Sigmoid colon (tissue), 7 donors: ENCODE measurements at regions of chr13 and their contacts with region 1.

Region 1: DNA sequence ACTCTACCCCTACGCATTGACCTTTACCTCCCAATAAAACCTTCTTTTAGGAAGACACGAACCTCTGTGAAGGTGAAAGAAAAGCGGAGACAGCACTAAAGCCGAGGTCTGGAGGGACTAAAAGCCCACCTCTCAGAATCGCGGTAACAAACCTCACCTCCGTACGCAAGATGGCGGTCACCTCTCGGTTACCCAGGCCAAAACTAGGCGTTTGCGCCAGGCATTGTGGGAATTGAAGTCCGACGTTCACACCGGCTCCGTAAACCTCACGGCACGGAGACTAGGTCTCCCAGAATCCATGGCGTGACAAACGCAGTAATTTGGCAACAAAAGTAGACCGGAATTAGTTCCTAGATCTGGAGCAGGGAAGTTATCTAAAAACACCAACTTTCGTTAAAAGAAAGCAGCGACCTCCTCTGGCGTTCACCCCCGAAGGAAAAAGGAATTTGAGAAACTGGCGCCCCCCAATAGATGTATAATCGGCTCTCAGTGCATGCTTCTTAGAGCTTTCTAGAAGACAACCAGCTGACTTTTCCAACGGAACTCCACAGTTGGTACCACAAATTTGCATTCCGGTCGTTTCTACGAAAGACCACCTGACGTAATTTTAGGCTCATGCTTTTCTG is at the start of gene N4BP2L2:
- DNase-seq: peak; percentile 98
- H3K4me3 ChIP-seq: peak within 1 kb of the TSS; percentile 68 to 83 (median 76)
- H3K27ac ChIP-seq: peak within 1 kb of the TSS; percentile 90 to 94 (median 92)
- H3K4me1 ChIP-seq: peaks cover 0 to 40% (median 39%) of the 10 kb centered on the region in 4 donors
- H3K27me3 ChIP-seq: no peaks in the 10 kb centered on the region
- CTCF ChIP-seq: no peak
- EP300 ChIP-seq: peak in 1 of 4 donors; percentile 3
- POLR2A ChIP-seq: peak; percentile 3 to 26
- total RNA-seq, gene N4BP2L2: 160 to 232 (median 222) TPM

Region 2: GRCh38 chr13:32427852-32428580 is 110.7 kb before region 1 on chr13 and contains the start of gene N4BP2L1:
- intact Hi-C with region 1: loop called (anchors 2 kb)
- DNase-seq: peak; percentile 87
- H3K4me3 ChIP-seq: peak within 1 kb of the TSS; percentile 80 to 94 (median 90)
- H3K27ac ChIP-seq: peak within 1 kb of the TSS; percentile 84 to 89 (median 88)
- H3K4me1 ChIP-seq: peaks cover 0 to 41% (median 29%) of the 10 kb centered on the region in 4 donors
- H3K27me3 ChIP-seq: no peaks in the 10 kb centered on the region
- CTCF ChIP-seq: no peak
- EP300 ChIP-seq: no peak
- POLR2A ChIP-seq: peak; percentile 66 to 68
- total RNA-seq, gene N4BP2L1: 17.7 to 34.9 (median 20.9) TPM